ENCODE measurements at regions of chr18 and their contacts with region 1.

Region 1: DNA sequence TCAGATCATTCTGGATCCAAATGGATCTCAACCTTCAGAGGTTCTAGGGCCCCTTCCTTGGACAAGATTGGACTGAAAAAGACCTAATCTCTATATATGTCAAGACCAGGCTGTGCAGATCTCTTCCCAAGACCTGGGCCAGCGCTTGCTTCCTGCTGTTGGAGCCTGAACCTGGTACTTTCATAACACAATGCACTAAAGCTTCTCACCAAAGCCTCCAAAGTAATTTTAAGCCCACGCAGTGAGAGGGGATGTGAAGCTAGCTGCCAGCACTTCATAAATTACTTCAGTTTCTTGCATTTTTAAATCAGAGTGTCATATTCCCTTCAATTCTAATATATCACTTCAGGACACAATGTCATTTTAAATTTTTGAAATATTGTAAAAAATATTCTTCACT is 50.7 kb downstream of the LRRC30 start:
- DNase-seq: no peak
- ATAC-seq: no peak
- H3K4me3 ChIP-seq: no peak overlapping the region
- H3K27ac ChIP-seq: no peak overlapping the region
- H3K4me1 ChIP-seq: no peaks in the 10 kb centered on the region
- H3K27me3 ChIP-seq: no peaks in the 10 kb centered on the region
- CTCF ChIP-seq: no peak

Region 2: DNA sequence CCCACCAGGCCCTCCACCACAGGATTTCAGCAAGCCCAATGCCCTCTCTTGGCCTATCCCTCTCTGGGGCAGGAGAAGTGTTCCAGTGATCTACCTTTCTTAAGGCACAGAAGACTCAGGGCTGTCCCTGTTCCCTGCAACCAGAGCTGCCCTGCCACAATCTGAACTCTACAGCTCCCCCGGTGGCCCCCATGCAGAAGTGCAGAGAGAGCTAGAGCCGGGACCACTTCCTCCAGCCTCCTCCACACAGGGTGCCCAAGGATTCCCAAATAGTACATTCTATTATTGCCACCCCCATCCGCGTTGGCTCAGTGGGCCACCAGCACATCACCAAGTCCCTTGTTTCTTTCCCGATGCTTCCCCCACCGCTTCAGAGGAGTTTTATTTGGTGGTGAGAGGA is 170.8 kb after region 1 on chr18:
- intact Hi-C with region 1: loop called in 4 of 10 experiments (anchors 10 kb)
- DNase-seq: peak; percentile 27 to 31
- ATAC-seq: peak in 7 of 8 donors; percentile 53 to 87 (median 71)
- H3K4me3 ChIP-seq: no peak overlapping the region
- H3K27ac ChIP-seq: no peak overlapping the region
- H3K4me1 ChIP-seq: peaks cover 0 to 17% (median 0%) of the 10 kb centered on the region in 9 donors
- H3K27me3 ChIP-seq: no peaks in the 10 kb centered on the region
- CTCF ChIP-seq: peak; percentile 45 to 74 (median 65)